ENCODE measurements at regions of chr21 and their contacts with region 1.

Region 1: DNA sequence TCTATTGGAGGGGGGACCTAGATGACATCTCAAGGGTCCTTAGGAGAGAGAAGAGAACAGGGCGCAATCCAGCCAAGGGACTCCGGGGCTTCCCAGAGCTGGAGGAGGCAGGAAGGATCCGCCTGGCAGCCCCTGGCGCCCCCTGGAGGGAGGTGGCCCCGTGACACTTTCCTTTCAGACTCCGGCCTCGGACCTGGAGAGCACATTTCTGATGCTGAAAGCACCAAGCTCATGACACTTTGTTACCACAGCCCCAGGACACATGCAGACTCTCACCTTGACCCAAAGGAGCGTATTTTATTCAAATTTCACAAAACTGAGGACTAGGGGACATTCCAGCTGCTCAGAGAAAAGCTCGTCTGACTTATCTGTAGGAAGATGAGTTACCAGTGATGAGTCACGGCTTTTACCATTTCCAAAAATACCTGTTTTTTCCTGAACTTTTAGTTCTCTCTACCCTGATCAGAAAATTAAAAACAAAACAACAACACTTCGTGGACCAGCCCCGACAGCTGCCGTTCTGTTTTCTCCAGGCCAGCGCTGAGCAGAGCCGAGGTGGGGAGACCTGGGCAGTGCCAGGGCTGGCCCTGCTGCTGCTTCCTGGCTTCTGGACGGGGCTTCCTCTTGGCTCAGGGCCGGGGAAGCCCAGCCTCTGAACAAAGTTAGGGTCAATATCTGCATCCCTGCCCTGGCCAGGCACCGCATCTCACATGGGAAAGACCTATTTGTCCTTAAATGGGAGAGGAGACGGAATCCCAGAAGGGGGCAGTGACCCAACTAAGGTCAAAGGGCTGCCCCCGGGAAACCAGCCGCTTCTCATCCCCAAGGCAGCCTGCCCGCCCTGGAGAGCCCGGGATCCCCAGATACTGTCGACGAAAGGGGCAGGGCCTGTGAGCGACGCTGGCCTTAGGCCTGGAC is 21.6 kb upstream of the POFUT2 start:
- DNase-seq: no peak
- H3K4me3 ChIP-seq: no peak overlapping the region
- H3K27me3 ChIP-seq: no peaks in the 10 kb centered on the region
- CTCF ChIP-seq: peak; percentile 79

Region 2: GRCh38 chr21:45294509-45295291 is 14.6 kb before region 1 on chr21:
- CTCF ChIA-PET with region 1: interaction called, 11 read pairs
- POLR2A ChIA-PET with region 1: no interaction called
- DNase-seq: peak; percentile 93
- H3K4me3 ChIP-seq: 0 out of 2 replicates have a peak overlapping the region, but pooled peaks have one; percentile 5
- H3K27me3 ChIP-seq: no peaks in the 10 kb centered on the region
- CTCF ChIP-seq: no peak

Region 3: GRCh38 chr21:45319461-45320211 is 10.3 kb after region 1 on chr21:
- CTCF ChIA-PET with region 1: interaction called, 29 read pairs
- POLR2A ChIA-PET with region 1: no interaction called
- DNase-seq: no peak
- H3K4me3 ChIP-seq: no peak overlapping the region
- H3K27me3 ChIP-seq: no peaks in the 10 kb centered on the region
- CTCF ChIP-seq: peak; percentile 27; the same call in 1 of the 2 replicates